AG04450 (cell line): ENCODE measurements at regions of chr20 and their contacts with region 1.

Region 1: DNA sequence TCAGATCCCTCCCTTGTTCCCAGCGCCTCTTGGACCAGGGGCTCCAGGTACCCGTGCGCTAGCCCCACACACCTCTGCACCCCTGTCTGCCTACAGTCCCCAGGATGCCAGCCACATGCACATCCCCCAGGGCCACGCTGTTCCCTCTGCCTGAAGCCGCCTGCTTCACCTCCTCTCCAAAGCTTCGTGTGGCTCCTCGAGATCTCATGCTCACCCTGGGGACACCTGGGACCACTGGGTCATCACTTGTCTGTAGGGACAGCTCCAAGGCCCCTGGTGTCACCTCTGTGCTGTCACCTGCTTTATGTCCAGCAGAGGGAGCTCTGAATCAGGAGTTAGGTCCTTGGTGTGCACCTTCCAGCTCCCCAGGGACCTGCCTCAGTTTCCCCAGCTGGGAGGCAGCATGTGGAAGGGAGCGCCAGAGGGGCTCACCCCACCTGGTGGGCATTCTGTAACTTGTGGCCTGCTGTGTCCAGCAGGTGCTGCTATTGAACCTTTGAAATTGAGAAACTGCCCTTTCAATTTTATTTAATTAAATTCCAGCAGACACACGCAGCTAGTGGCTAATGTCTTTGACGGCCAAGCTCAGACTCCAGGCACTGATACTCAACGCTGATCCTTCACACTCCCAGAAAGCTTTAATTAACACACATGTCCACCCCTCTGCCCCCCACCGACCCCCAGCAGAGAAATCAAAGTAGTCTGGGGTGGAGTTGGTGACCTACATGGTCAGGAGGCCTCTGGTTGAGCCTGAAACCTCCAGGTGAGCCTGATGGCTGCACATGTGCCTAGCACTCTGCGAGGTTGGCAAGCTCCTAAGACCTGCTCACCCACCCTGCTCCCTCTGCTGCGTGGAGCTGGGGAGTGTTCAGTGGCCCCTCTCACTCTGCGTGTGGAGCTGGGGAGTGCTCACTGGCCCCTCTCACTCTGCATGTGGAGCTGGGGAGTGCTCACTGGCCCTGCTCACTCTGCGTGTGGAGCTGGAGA is 7.6 kb upstream of the YTHDF1 start:
- DNase-seq: no peak
- H3K4me3 ChIP-seq: no peak overlapping the region
- H3K27ac ChIP-seq: no peak overlapping the region
- H3K27me3 ChIP-seq: peaks cover 22% of the 10 kb centered on the region
- CTCF ChIP-seq: peak; percentile 82

Region 2: GRCh38 chr20:62977613-62978560 is 245.6 kb before region 1 on chr20:
- CTCF ChIA-PET with region 1: no interaction called
- POLR2A ChIA-PET with region 1: no interaction called
- DNase-seq: no peak
- H3K4me3 ChIP-seq: no peak overlapping the region
- H3K27ac ChIP-seq: no peak overlapping the region
- H3K27me3 ChIP-seq: peaks cover 68% of the 10 kb centered on the region
- CTCF ChIP-seq: no peak

Region 3: DNA sequence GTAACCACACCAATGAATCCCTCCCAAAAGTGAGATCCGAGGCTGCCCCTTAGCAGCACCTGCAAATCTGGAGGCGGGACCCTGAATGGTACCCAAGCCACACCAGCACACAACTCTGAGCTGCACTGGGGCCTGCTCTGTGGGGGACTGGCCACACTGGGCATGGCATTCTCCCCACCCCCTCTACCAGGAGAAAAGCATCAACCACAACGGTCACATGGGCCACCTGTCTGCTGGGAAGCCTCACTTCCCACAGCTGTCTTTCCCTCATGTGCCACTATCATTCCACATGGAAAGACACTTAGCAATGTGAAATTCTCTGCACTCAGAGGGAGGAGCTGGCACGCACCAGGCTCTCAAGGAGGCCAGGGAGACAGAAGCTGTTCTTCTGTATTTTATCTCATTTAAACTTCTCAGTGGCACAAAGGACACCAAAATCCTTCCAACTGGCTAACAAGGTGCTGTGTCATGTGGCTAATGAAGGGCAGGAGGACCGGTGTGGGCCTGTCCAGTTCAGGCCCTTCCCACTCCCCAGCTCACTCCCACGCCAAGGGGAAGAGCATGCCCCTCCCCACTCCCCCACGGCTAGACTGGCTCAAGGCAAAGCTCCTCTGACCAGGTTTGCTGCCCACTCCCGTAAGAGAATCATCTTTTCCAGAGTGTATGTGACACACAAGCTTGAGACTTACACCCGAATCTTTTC is 26.6 kb before region 1 on chr20:
- CTCF ChIA-PET with region 1: interaction called, 10 read pairs
- POLR2A ChIA-PET with region 1: no interaction called
- DNase-seq: no peak
- H3K4me3 ChIP-seq: no peak overlapping the region
- H3K27ac ChIP-seq: no peak overlapping the region
- H3K27me3 ChIP-seq: no peaks in the 10 kb centered on the region
- CTCF ChIP-seq: no peak

Region 4: GRCh38 chr20:63246490-63247288 is 23.2 kb after region 1 on chr20:
- CTCF ChIA-PET with region 1: interaction called, 13 read pairs
- POLR2A ChIA-PET with region 1: no interaction called
- DNase-seq: no peak
- H3K4me3 ChIP-seq: no peak overlapping the region
- H3K27ac ChIP-seq: no peak overlapping the region
- H3K27me3 ChIP-seq: peaks cover 16% of the 10 kb centered on the region
- CTCF ChIP-seq: no peak

Region 5: GRCh38 chr20:63272584-63273579 is 49.4 kb after region 1 on chr20 and contains the start of gene ARFGAP1:
- CTCF ChIA-PET with region 1: interaction called, 15 read pairs
- POLR2A ChIA-PET with region 1: interaction called, 9 read pairs
- DNase-seq: peak; percentile 60
- H3K4me3 ChIP-seq: peak within 1 kb of the TSS; percentile 87
- H3K27ac ChIP-seq: peak within 1 kb of the TSS; percentile 52
- H3K27me3 ChIP-seq: peaks cover 2% of the 10 kb centered on the region
- CTCF ChIP-seq: no peak
- polyA plus RNA-seq, gene ARFGAP1: 52.6 and 70.9 TPM in 2 replicates

Region 6: GRCh38 chr20:63290677-63291472 is 67.4 kb after region 1 on chr20:
- CTCF ChIA-PET with region 1: interaction called, 17 read pairs
- POLR2A ChIA-PET with region 1: no interaction called
- DNase-seq: no peak
- H3K4me3 ChIP-seq: no peak overlapping the region
- H3K27ac ChIP-seq: no peak overlapping the region
- H3K27me3 ChIP-seq: peaks cover 12% of the 10 kb centered on the region
- CTCF ChIP-seq: peak; percentile 67